CD4-positive, alpha-beta memory T cell (primary cell): ENCODE measurements at regions of chr11 and their contacts with region 1.

Region 1: GRCh38 chr11:67345920-67346799 is 7.2 kb downstream of the POLD4 start:
- DNase-seq: peak in 4 of 5 donors; percentile 30 to 41 (median 38)
- H3K4me3 ChIP-seq: no peak overlapping the region
- H3K4me3 Mint-ChIP-seq: peak overlapping the region in 3 of 8 donors; percentile 35 to 51 (median 50)
- H3K27ac ChIP-seq: no peak overlapping the region
- H3K27ac Mint-ChIP-seq: peak overlapping the region in 6 of 7 donors; percentile 50 to 92 (median 85)
- H3K4me1 ChIP-seq: peaks cover 35% of the 10 kb centered on the region
- H3K4me1 Mint-ChIP-seq: peaks cover 28 to 55% (median 36%) of the 10 kb centered on the region in 4 donors
- H3K27me3 ChIP-seq: no peaks in the 10 kb centered on the region
- H3K27me3 Mint-ChIP-seq: no peaks in the 10 kb centered on the region

Region 2: DNA sequence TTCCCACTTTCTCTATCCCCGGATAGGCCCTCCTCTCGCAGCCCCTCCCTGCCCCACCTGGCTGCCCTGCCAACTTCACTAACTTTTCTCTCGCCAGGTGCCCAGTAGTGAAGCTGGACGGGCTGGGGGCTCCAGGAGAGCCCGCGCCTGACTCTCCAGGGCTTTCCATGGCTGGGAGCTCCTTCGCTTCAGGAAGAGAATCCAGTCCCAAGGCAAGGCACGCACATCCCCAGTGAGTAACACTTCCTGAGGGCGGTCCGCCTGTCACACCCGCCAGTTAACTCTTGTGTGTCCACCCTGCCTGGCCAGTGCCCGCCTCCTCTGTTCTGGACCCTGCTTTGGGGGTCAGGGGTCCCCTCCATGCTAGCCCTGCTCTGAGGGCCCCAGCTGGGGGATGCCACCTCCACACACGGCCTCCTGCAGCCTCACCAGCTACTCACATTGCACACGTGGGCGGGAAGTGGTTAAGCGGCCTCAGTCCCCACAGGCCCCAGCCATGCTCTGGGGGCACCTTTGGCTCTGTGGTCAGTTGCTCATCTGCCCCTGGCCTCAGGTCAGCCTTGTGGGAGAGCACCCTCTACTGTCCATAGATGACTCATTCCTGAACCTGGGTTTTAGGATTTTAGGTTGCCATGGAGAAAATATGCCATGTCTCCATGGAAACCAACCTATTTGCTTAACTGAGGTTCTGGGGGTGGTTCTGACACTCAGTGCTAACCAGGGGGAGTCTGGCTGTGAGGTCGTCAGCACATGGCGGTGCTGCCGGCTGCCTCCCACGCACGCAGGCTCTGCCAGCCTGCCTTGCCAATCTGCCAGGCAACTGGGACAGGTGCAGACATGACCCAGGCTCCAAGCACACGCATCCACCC is 1009.7 kb before region 1 on chr11 and contains the start of gene RIN1:
- CTCF ChIA-PET with region 1: no interaction called
- POLR2A ChIA-PET with region 1: no interaction called
- intact Hi-C with region 1: no loop called
- DNase-seq: peak in 3 of 5 donors; percentile 25 to 64 (median 36)
- H3K4me3 ChIP-seq: peak within 1 kb of the TSS in 1 of 2 donors; percentile 41
- H3K4me3 Mint-ChIP-seq: peak within 1 kb of the TSS; percentile 80 to 90 (median 84)
- H3K27ac ChIP-seq: peak within 1 kb of the TSS; percentile 29
- H3K27ac Mint-ChIP-seq: peak within 1 kb of the TSS in 6 of 7 donors; percentile 6 to 75 (median 58)
- H3K4me1 ChIP-seq: peaks cover 18% of the 10 kb centered on the region
- H3K4me1 Mint-ChIP-seq: peaks cover 10 to 27% (median 16%) of the 10 kb centered on the region in 4 donors
- H3K27me3 ChIP-seq: no peaks in the 10 kb centered on the region
- H3K27me3 Mint-ChIP-seq: no peaks in the 10 kb centered on the region
- total RNA-seq, gene RIN1: 5.8 to 10.1 TPM

Region 3: GRCh38 chr11:67099831-67100324 is 246.3 kb before region 1 on chr11:
- CTCF ChIA-PET with region 1: no interaction called
- POLR2A ChIA-PET with region 1: no interaction called
- intact Hi-C with region 1: no loop called
- DNase-seq: no peak
- H3K4me3 ChIP-seq: no peak overlapping the region
- H3K4me3 Mint-ChIP-seq: no peak overlapping the region
- H3K27ac ChIP-seq: no peak overlapping the region
- H3K27ac Mint-ChIP-seq: peak overlapping the region; percentile 25 to 87 (median 70)
- H3K4me1 ChIP-seq: peaks cover 7% of the 10 kb centered on the region
- H3K4me1 Mint-ChIP-seq: peaks cover 6 to 16% (median 10%) of the 10 kb centered on the region in 4 donors
- H3K27me3 ChIP-seq: no peaks in the 10 kb centered on the region
- H3K27me3 Mint-ChIP-seq: no peaks in the 10 kb centered on the region

Region 4: GRCh38 chr11:67332081-67332691 is 14.0 kb before region 1 on chr11:
- CTCF ChIA-PET with region 1: interaction called, 10 read pairs
- POLR2A ChIA-PET with region 1: no interaction called
- intact Hi-C with region 1: no loop called
- DNase-seq: no peak
- H3K4me3 ChIP-seq: no peak overlapping the region
- H3K4me3 Mint-ChIP-seq: no peak overlapping the region
- H3K27ac ChIP-seq: no peak overlapping the region
- H3K27ac Mint-ChIP-seq: no peak overlapping the region
- H3K4me1 ChIP-seq: no peaks in the 10 kb centered on the region
- H3K4me1 Mint-ChIP-seq: no peaks in the 10 kb centered on the region
- H3K27me3 ChIP-seq: no peaks in the 10 kb centered on the region
- H3K27me3 Mint-ChIP-seq: no peaks in the 10 kb centered on the region

Region 5: GRCh38 chr11:67382276-67383136 is 36.3 kb after region 1 on chr11:
- CTCF ChIA-PET with region 1: interaction called, 1,065 read pairs
- POLR2A ChIA-PET with region 1: interaction called, 449 read pairs
- intact Hi-C with region 1: no loop called
- DNase-seq: peak; percentile 79 to 84 (median 82)
- H3K4me3 ChIP-seq: no peak overlapping the region
- H3K4me3 Mint-ChIP-seq: peak overlapping the region in 1 of 8 donors; percentile 37
- H3K27ac ChIP-seq: no peak overlapping the region
- H3K27ac Mint-ChIP-seq: peak overlapping the region in 4 of 7 donors; percentile 47 to 86 (median 68)
- H3K4me1 ChIP-seq: peaks cover 6% of the 10 kb centered on the region
- H3K4me1 Mint-ChIP-seq: peaks cover 2 to 8% (median 6%) of the 10 kb centered on the region in 4 donors
- H3K27me3 ChIP-seq: no peaks in the 10 kb centered on the region
- H3K27me3 Mint-ChIP-seq: peaks cover 0 to 1% of the 10 kb centered on the region in 2 donors